Heart left ventricle (tissue), 16 donors: ENCODE measurements at regions of chr1 and their contacts with region 1.

Region 1: DNA sequence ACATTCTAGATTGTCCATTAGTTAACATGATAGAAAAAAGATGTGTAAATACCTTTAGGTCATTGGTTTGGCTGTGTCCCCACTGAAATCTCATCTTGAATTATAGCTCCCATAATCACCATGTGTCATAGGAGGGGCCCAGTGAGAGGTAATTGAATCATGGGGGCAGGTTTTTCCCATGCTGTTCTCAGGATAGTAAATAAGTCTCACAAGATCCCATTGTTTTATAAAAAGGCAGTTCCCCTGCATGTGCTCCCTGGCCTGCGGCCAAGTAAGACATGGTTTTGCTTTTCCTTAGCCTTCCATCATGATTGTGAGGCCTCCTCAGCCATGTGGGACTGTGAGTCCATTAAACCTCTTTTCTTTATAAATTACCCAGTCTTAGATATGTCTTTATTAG is 32.5 kb upstream of the SLC44A5 start:
- DNase-seq: no peak
- ATAC-seq: no peak
- H3K4me3 ChIP-seq: no peak overlapping the region
- H3K27ac ChIP-seq: no peak overlapping the region
- H3K4me1 ChIP-seq: no peaks in the 10 kb centered on the region
- H3K27me3 ChIP-seq: no peaks in the 10 kb centered on the region
- CTCF ChIP-seq: no peak
- POLR2A ChIP-seq: no peak

Region 2: GRCh38 chr1:75423136-75423535 is 220.3 kb before region 1 on chr1:
- intact Hi-C with region 1: no loop called
- DNase-seq: no peak
- ATAC-seq: no peak
- H3K4me3 ChIP-seq: no peak overlapping the region
- H3K27ac ChIP-seq: peak overlapping the region in 2 of 12 donors; percentile 8 to 60
- H3K4me1 ChIP-seq: no peaks in the 10 kb centered on the region
- H3K27me3 ChIP-seq: no peaks in the 10 kb centered on the region
- CTCF ChIP-seq: no peak
- POLR2A ChIP-seq: no peak

Region 3: DNA sequence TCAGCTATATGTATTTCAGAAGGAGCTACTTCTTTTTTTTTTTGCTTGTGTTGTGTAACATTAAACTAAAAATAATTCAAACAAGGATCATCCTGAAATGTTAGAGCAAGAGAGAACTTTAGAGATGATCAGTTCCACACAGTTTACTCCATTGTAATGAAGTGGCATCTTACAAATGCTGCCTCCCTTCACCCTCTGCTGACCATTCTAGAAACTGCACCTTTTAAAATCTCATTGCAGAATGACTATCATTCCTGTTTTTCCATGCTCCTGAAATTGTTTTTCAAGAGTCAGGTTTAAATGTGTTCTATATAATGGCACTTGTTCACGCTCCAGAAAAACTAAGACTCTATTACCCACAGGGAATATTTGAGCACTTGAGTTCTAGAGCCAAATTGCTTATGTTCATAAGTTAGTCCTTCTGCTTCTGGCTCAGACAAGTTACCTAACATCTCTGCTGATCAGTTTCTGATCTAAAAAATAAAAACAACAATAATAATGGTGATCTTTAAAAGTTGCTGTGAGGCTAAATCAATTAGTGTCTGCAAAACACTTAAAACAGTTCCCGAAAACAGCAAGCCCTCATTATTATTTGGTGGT is 11.0 kb before region 1 on chr1:
- intact Hi-C with region 1: loop called in 1 of 10 experiments (anchors 1 kb)
- DNase-seq: no peak
- ATAC-seq: peak in 1 of 4 donors; percentile 58
- H3K4me3 ChIP-seq: no peak overlapping the region
- H3K27ac ChIP-seq: no peak overlapping the region
- H3K4me1 ChIP-seq: no peaks in the 10 kb centered on the region
- H3K27me3 ChIP-seq: peaks cover 0 to 9% (median 0%) of the 10 kb centered on the region in 9 donors
- CTCF ChIP-seq: peak; percentile 49 to 76 (median 65)
- POLR2A ChIP-seq: no peak

Region 4: DNA sequence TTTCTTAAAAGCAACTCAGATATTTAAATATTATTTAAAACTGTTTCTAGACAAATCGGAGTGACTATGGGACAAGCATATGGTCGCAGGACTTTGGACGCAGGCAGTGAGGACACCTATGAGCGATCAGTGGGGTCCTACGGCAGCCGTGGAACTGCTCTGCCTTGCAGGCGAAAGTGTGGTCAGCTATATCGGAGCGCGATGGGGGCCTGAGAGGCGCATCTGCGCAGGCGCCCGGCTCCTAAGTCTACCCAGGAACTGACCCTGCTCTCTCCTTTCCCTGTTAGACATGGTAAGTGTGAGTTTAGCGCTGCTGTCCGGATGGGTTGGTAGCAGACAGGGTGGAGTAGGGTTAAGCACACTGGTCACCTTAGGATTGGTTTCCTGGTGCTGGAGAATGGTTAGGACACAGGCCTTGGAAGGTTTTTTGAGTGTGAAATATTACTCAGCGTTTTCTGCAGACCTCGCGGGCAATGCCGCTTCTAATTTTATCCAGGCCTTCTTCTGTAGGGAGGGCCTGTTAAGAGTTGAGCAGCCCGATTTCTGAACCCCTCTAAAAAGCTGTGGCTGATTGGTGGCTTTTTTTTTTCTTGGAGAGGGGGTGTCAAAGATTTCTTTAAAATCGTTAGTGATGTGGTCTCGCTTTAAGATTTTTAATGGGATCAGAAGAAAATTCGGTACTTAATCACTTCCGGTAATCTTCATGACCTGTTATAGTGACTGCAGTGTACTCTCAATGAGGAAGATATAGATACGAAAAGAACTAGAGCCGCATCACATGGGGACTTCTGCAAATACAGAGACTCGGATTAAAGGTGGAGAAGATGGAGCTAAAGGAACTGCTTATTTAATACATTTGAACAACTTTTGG is 142.8 kb after region 1 on chr1 and contains the start of gene RABGGTB:
- intact Hi-C with region 1: loop called in 1 of 10 experiments (anchors 5 kb)
- DNase-seq: peak; percentile 93 to 96 (median 96)
- ATAC-seq: peak; percentile 97 to 100 (median 99)
- H3K4me3 ChIP-seq: peak within 1 kb of the TSS; percentile 50 to 86 (median 77)
- H3K27ac ChIP-seq: peak within 1 kb of the TSS; percentile 59 to 92 (median 86)
- H3K4me1 ChIP-seq: peaks cover 0 to 54% (median 40%) of the 10 kb centered on the region in 12 donors
- H3K27me3 ChIP-seq: no peaks in the 10 kb centered on the region
- CTCF ChIP-seq: no peak
- POLR2A ChIP-seq: peak in 1 of 2 donors; percentile 88
- total RNA-seq, gene RABGGTB: 30.7 to 67.4 (median 55.1) TPM